Activated naive CD4-positive, alpha-beta T cell treated with anti-CD3 and anti-CD28 coated beads, Interleukin-2, amount 10 ng/mL, durations not matched to agents 7 days and 5 days (primary cell): ENCODE measurements at regions of chr22 and their contacts with region 1.

Region 1: DNA sequence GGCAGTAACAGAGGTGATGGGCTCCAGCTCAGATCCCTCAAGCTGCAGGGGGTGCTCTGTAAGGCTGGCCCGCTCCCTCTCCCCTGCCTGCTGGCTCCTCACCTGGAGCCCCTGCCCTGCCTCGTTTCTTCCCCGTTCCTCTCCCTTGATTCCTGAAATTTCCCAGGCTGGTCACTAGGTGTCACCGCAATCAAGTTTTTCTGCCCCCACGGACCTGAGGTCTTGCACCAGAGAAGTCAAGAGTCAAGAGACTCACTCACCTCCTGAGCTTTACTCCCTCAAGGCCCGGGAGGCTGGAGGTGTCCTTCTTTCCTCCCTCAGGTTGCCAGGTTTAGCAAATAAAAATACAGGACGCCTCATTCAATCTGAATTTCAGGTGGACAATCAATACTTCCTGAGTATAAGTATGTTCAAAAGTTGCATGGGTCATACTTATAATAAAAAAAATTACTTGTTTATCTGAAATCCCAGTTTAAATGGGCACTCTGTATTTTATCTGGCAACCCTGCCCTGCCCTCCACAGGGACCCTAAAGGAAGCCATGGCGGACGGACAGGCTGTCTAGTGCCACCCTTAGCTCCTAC is 69.2 kb downstream of the SCUBE1 start:
- DNase-seq: peak; percentile 63
- H3K4me3 Mint-ChIP-seq: no peak overlapping the region
- H3K27ac Mint-ChIP-seq: no peak overlapping the region
- H3K4me1 Mint-ChIP-seq: peaks cover 3% of the 10 kb centered on the region
- H3K27me3 Mint-ChIP-seq: peaks cover 28% of the 10 kb centered on the region

Region 2: GRCh38 chr22:43230971-43231723 is 42.8 kb before region 1 on chr22:
- CTCF ChIA-PET with region 1: interaction called, 49 read pairs
- DNase-seq: peak; percentile 80
- H3K4me3 Mint-ChIP-seq: no peak overlapping the region
- H3K27ac Mint-ChIP-seq: no peak overlapping the region
- H3K4me1 Mint-ChIP-seq: peaks cover 5% of the 10 kb centered on the region
- H3K27me3 Mint-ChIP-seq: peaks cover 23% of the 10 kb centered on the region

Region 3: GRCh38 chr22:43263645-43264514 is 10.1 kb before region 1 on chr22:
- CTCF ChIA-PET with region 1: interaction called, 17 read pairs
- DNase-seq: peak; percentile 85
- H3K4me3 Mint-ChIP-seq: peak overlapping the region; percentile 67
- H3K27ac Mint-ChIP-seq: peak overlapping the region; percentile 93
- H3K4me1 Mint-ChIP-seq: peaks cover 31% of the 10 kb centered on the region
- H3K27me3 Mint-ChIP-seq: peaks cover 47% of the 10 kb centered on the region

Region 4: DNA sequence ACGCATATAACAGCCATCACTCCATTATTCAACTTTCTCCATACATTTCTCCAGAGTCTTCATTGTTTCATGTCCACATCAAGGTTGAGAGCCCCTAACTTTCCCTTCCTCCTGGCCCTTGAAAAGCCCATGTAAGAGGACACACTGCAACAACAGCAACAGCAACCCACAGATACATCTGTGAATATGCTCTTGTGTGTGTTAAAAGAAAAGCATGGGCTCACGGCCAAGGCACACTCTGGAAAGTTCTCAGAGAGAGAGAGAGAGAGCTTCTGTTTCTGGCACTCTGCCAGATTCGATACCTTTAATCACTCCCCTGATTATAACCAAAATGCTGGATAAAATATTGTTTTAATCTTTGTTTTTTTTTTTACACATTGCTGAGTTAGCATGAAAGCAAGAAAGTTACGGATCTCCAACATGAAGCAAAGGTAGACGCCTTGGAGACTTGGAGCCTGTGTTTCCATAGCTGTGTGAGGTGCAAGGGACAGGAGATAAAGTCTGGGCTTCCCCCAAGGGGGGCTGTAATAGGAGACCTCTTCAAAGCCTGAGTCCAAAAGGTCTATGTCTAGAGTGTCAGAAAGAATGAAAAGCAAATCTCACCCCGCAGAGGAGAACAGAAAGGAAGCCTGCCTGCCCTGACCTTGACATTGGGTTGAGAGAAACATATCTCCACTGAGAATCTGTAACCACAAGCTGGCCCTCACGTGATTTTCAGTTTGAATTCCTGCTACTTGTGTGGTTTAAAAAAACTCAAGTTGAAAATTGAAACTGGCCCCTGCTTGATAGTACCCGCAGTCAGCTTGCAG is 104.1 kb after region 1 on chr22:
- CTCF ChIA-PET with region 1: interaction called, 62 read pairs
- DNase-seq: no peak
- H3K4me3 Mint-ChIP-seq: no peak overlapping the region
- H3K27ac Mint-ChIP-seq: no peak overlapping the region
- H3K4me1 Mint-ChIP-seq: peaks cover 27% of the 10 kb centered on the region
- H3K27me3 Mint-ChIP-seq: peaks cover 75% of the 10 kb centered on the region

Region 5: GRCh38 chr22:43385770-43386641 is 112.0 kb after region 1 on chr22:
- CTCF ChIA-PET with region 1: interaction called, 62 read pairs
- DNase-seq: peak; percentile 78
- H3K4me3 Mint-ChIP-seq: no peak overlapping the region
- H3K27ac Mint-ChIP-seq: no peak overlapping the region
- H3K4me1 Mint-ChIP-seq: peaks cover 12% of the 10 kb centered on the region
- H3K27me3 Mint-ChIP-seq: peaks cover 61% of the 10 kb centered on the region